ENCODE measurements at regions of chr19 and their contacts with region 1.

Region 1: GRCh38 chr19:54952591-54953344 is 5.4 kb upstream of the NLRP7 start:
- DNase-seq: peak; percentile 90 to 99
- H3K4me3 ChIP-seq: peak overlapping the region; percentile 17; the same call in 1 of the 2 replicates
- H3K27ac ChIP-seq: peak overlapping the region; percentile 88
- H3K4me1 ChIP-seq: peaks cover 24% of the 10 kb centered on the region
- H3K27me3 ChIP-seq: no peaks in the 10 kb centered on the region
- CTCF ChIP-seq: no peak

Region 2: DNA sequence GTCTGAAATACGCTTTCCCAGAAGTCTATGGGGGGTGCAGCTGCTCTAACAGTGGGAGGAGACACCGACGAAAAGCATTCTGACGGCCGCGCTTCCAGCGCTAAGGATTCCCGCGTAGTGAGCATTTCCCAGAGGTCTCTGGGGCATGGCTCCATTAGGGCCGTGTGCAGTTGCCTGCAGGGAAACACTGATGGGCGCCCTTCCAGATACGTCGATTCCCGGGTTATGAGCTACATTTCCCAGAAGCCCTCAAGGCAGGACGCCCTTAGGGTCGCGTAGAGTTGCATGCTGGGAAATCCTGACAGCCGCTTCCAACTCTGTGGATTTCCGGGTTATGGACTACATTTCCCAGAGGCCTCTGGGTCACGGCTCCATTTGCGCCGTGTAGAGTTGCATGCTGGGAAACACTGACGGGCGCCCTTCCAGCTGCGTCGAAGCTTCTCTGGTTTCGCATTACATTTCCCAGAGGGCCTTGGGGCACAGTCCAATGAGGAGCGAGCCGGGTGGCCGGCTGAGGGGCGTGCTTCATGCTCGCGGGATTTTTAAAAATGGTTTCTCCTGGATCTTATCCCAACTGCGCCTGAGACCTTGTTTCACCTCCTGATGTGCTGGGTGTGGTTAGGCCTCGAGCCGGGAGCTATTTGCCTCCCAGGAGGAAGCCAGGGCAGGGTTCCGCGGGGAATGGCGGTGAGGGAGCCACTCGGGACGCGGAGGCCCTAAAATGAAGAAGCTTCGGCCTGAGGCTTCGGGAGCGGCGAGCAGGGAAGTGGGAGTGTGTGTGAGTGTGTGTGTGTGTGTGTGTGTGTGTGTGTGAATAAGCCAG is 1432.0 kb before region 1 on chr19:
- CTCF ChIA-PET with region 1: no interaction called
- POLR2A ChIA-PET with region 1: interaction called, 18 read pairs
- intact Hi-C with region 1: no loop called
- DNase-seq: peak; percentile 93 to 97
- H3K4me3 ChIP-seq: peak overlapping the region; percentile 62
- H3K27ac ChIP-seq: no peak overlapping the region
- H3K4me1 ChIP-seq: peaks cover 14% of the 10 kb centered on the region
- H3K27me3 ChIP-seq: no peaks in the 10 kb centered on the region
- CTCF ChIP-seq: no peak

Region 3: DNA sequence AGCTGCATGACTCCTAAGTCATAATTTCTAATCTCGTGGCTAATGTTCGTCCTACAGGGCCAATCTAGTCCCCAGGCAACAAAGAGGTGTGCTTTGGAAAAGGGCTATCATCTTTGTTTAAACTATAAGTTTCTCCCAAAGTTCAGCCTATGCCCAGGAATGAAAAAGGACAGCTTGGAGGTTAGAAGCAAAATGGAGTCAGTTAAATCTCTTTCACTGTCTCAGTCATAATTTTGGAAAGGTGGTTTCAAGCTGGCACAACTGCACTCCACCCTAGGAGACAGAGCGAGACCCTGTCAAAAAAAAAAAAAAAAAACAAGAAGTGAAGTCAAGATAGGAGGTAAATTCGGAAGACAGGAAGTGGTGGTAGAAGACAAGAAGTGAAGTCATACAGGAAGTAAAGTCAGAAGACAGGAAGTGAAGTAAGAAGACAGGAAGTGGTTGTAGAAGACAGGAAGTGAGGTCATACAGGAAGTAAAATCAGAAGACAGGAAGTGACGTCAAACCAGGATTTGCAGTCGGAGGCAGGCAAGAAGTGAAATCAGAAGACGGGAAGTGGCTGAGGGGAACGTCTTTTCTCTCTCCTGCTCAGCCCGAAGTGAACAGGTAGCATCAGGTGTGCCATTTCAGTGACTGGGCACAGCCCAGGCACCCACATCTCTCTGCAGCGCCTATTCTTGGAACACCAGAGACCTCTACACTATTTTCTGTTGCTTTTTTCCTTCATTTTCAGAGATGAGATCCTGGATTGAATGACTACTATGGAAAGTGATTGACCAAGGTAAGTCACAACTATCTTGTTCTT is 53.1 kb after region 1 on chr19:
- CTCF ChIA-PET with region 1: no interaction called
- POLR2A ChIA-PET with region 1: no interaction called
- intact Hi-C with region 1: no loop called
- DNase-seq: peak; percentile 73 to 87
- H3K4me3 ChIP-seq: peak overlapping the region; percentile 71
- H3K27ac ChIP-seq: peak overlapping the region; percentile 58
- H3K4me1 ChIP-seq: no peaks in the 10 kb centered on the region; the same call in 1 of the 2 replicates
- H3K27me3 ChIP-seq: peaks cover 25% of the 10 kb centered on the region
- CTCF ChIP-seq: no peak

Region 4: DNA sequence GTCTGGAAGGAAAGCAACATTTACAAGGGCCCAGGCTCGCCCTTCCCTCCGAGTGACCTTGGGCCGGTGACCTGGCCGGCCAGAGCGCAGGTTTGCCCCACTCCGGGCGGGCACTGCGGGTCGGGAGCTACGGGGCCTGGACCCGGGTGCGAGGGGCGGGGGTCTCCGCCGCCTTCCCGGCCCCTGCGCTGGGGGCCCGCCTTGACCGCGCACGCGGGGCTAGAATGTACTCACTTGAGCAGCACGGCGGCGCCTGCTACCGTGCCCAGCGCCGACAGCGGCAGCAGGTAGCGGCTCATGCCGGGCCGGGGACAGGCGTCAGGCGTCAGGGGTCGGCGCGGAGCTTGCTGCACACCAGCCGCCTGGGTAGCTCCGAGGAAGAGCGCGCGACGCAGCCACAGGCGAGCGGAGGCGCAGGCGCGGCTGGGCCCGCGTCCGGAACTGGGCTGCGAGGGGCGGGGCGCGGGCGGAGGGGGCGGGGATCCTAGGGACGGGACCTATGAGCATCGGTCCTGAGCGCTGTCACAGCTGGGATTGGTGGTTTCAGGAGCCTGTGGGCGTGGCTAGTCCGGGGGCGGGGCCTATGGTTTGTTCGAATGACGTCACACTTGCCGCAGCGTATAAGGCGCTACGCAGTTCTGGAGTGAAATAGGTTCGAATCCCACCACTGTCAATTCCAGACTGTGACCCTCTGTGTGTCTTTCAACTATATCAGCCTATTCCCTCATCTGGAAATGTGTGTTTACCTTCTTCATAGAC is 110.1 kb after region 1 on chr19 and contains the start of gene RDH13:
- CTCF ChIA-PET with region 1: no interaction called
- POLR2A ChIA-PET with region 1: interaction called, 12 read pairs
- intact Hi-C with region 1: loop called (anchors 10 kb)
- DNase-seq: peak; percentile 95 to 98
- H3K4me3 ChIP-seq: peak within 1 kb of the TSS; percentile 100
- H3K27ac ChIP-seq: peak within 1 kb of the TSS; percentile 71
- H3K4me1 ChIP-seq: peaks cover 16% of the 10 kb centered on the region
- H3K27me3 ChIP-seq: no peaks in the 10 kb centered on the region
- CTCF ChIP-seq: no peak; the same call in 1 of the 2 replicates
- total RNA-seq, gene RDH13: 39.8 and 42.1 TPM in 2 replicates

Region 5: GRCh38 chr19:55075687-55076003 is 122.9 kb after region 1 on chr19 and contains the start of gene EPS8L1:
- CTCF ChIA-PET with region 1: no interaction called
- POLR2A ChIA-PET with region 1: interaction called, 12 read pairs
- intact Hi-C with region 1: no loop called
- DNase-seq: peak; percentile 92 to 97
- H3K4me3 ChIP-seq: peak within 1 kb of the TSS; percentile 60
- H3K27ac ChIP-seq: peak within 1 kb of the TSS; percentile 79
- H3K4me1 ChIP-seq: peaks cover 31% of the 10 kb centered on the region
- H3K27me3 ChIP-seq: no peaks in the 10 kb centered on the region
- CTCF ChIP-seq: no peak
- total RNA-seq, gene EPS8L1: 111 and 162 TPM in 2 replicates

Measured in PC-9 (cell line).